Activated B cell treated with CpG ODN at 0.5 μM for 24 hours (primary cell): ENCODE measurements at regions of chr3 and their contacts with region 1.

Region 1: DNA sequence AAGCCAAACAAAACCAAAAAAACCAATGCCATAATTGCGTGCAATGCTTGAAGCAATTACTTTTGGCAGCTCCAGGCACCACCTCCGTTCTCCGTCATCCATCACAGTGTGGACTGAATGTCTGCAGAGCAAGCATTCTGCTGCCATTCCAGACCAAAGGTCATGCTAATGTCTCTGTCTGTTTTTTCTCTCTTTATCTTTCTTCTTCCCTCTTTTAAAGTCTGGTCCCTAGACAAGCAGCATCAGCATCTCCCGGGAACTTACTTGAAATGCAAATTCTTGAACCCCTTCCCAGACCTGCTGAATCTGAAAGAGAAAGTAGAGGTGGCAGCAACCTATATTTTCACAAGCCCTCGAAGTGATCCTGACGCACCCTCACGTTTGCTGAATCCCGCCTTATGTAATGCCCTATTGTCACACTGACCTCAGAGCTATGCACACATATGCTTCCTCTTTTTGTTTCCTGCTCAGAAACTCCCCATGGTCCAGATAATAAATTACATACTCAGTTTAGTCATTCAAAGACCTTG is 297.3 kb upstream of the PROK2 start:
- DNase-seq: no peak
- ATAC-seq: peak; percentile 81
- H3K4me3 Mint-ChIP-seq: peak overlapping the region; percentile 72
- H3K27ac Mint-ChIP-seq: peak overlapping the region; percentile 71
- H3K4me1 Mint-ChIP-seq: peaks cover 71% of the 10 kb centered on the region
- H3K27me3 Mint-ChIP-seq: peaks cover 12% of the 10 kb centered on the region
- CTCF ChIP-seq: no peak

Region 2: GRCh38 chr3:72068621-72069020 is 13.6 kb before region 1 on chr3:
- CTCF ChIA-PET with region 1: no interaction called
- POLR2A ChIA-PET with region 1: no interaction called
- intact Hi-C with region 1: loop called (anchors 1 kb)
- DNase-seq: no peak
- ATAC-seq: no peak
- H3K4me3 Mint-ChIP-seq: no peak overlapping the region
- H3K27ac Mint-ChIP-seq: no peak overlapping the region
- H3K4me1 Mint-ChIP-seq: no peaks in the 10 kb centered on the region
- H3K27me3 Mint-ChIP-seq: peaks cover 17% of the 10 kb centered on the region
- CTCF ChIP-seq: no peak

Region 3: GRCh38 chr3:72163809-72164634 is 81.8 kb after region 1 on chr3:
- CTCF ChIA-PET with region 1: interaction called, 3 read pairs
- POLR2A ChIA-PET with region 1: no interaction called
- intact Hi-C with region 1: loop called (anchors 1 kb)
- DNase-seq: peak; percentile 53
- ATAC-seq: peak; percentile 87
- H3K4me3 Mint-ChIP-seq: peak overlapping the region; percentile 64
- H3K27ac Mint-ChIP-seq: peak overlapping the region; percentile 81
- H3K4me1 Mint-ChIP-seq: peaks cover 52% of the 10 kb centered on the region
- H3K27me3 Mint-ChIP-seq: peaks cover 2% of the 10 kb centered on the region
- CTCF ChIP-seq: no peak

Region 4: GRCh38 chr3:72185549-72186399 is 103.5 kb after region 1 on chr3:
- CTCF ChIA-PET with region 1: no interaction called
- POLR2A ChIA-PET with region 1: no interaction called
- intact Hi-C with region 1: no loop called
- DNase-seq: no peak
- ATAC-seq: peak; percentile 92
- H3K4me3 Mint-ChIP-seq: peak overlapping the region; percentile 2
- H3K27ac Mint-ChIP-seq: no peak overlapping the region
- H3K4me1 Mint-ChIP-seq: peaks cover 40% of the 10 kb centered on the region
- H3K27me3 Mint-ChIP-seq: no peaks in the 10 kb centered on the region
- CTCF ChIP-seq: no peak

Region 5: GRCh38 chr3:72270072-72270681 is 187.9 kb after region 1 on chr3:
- CTCF ChIA-PET with region 1: no interaction called
- POLR2A ChIA-PET with region 1: no interaction called
- intact Hi-C with region 1: loop called (anchors 5 kb)
- DNase-seq: no peak
- ATAC-seq: no peak
- H3K4me3 Mint-ChIP-seq: peak overlapping the region; percentile 38
- H3K27ac Mint-ChIP-seq: no peak overlapping the region
- H3K4me1 Mint-ChIP-seq: peaks cover 94% of the 10 kb centered on the region
- H3K27me3 Mint-ChIP-seq: no peaks in the 10 kb centered on the region
- CTCF ChIP-seq: no peak

Region 6: GRCh38 chr3:72818092-72818773 is 736.0 kb after region 1 on chr3:
- CTCF ChIA-PET with region 1: interaction called, 3 read pairs
- POLR2A ChIA-PET with region 1: no interaction called
- intact Hi-C with region 1: loop called (anchors 5 kb)
- DNase-seq: no peak
- ATAC-seq: no peak
- H3K4me3 Mint-ChIP-seq: no peak overlapping the region
- H3K27ac Mint-ChIP-seq: no peak overlapping the region
- H3K4me1 Mint-ChIP-seq: peaks cover 23% of the 10 kb centered on the region
- H3K27me3 Mint-ChIP-seq: no peaks in the 10 kb centered on the region
- CTCF ChIP-seq: no peak